ENCODE measurements at regions of chr13 and their contacts with region 1.

Region 1: GRCh38 chr13:30465585-30466357 is at the start of gene HMGB1:
- DNase-seq: peak; percentile 98 to 99
- ATAC-seq: peak; percentile 95 to 97 (median 96)
- H3K4me3 ChIP-seq: peak within 1 kb of the TSS; percentile 96
- H3K27ac ChIP-seq: peak within 1 kb of the TSS; percentile 99
- H3K4me1 ChIP-seq: peaks cover 27% of the 10 kb centered on the region
- H3K27me3 ChIP-seq: no peaks in the 10 kb centered on the region
- CTCF ChIP-seq: no peak
- total RNA-seq, gene HMGB1: 126 to 216 (median 187) TPM

Region 2: DNA sequence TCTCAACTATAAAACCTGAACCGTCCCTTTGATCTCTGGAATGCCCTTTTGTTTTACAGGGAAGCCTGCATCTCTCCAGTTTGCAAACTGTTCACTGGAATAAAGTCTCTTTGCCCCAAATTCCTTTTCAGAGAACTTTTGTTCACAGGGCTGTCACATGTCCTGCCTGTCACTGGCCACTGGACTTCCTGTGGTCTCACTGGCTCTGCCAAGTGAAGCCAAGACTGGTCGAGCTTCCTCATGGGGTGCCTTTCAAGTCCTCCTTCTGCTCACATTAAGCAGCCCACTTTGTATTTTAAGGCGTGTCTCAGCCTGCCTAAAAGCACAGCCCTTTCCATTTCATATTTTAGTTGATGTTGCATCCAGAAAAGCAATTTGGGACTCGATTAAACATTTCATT is 374.1 kb before region 1 on chr13:
- intact Hi-C with region 1: no loop called
- DNase-seq: no peak
- ATAC-seq: no peak
- H3K4me3 ChIP-seq: no peak overlapping the region
- H3K27ac ChIP-seq: no peak overlapping the region
- H3K4me1 ChIP-seq: no peaks in the 10 kb centered on the region
- H3K27me3 ChIP-seq: no peaks in the 10 kb centered on the region
- CTCF ChIP-seq: no peak

Region 3: GRCh38 chr13:30132623-30133553 is 332.9 kb before region 1 on chr13:
- intact Hi-C with region 1: loop called (anchors 5 kb)
- DNase-seq: peak; percentile 97
- ATAC-seq: peak; percentile 95 to 99 (median 96)
- H3K4me3 ChIP-seq: peak overlapping the region; percentile 15
- H3K27ac ChIP-seq: no peak overlapping the region
- H3K4me1 ChIP-seq: no peaks in the 10 kb centered on the region
- H3K27me3 ChIP-seq: no peaks in the 10 kb centered on the region
- CTCF ChIP-seq: peak; percentile 95

Region 4: DNA sequence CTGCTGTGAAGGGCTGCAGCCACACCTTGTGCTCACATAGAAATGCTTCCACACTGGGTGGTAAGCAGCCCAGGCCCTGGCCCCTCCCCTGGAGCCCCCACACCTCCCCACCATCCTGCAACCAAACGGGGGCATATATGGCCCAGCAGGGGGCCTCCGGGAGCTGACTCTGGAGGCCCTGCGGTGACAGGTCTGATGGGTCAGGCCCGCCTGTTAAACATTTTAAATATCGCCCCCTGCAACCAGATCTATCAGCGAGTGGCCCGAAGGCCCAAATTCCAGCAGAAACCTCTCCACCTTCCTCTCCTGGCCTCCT is 110.4 kb before region 1 on chr13:
- intact Hi-C with region 1: loop called in 1 of 2 experiments (anchors 5 kb)
- DNase-seq: no peak
- ATAC-seq: peak in 3 of 4 donors; percentile 63 to 70 (median 68)
- H3K4me3 ChIP-seq: no peak overlapping the region
- H3K27ac ChIP-seq: no peak overlapping the region
- H3K4me1 ChIP-seq: no peaks in the 10 kb centered on the region
- H3K27me3 ChIP-seq: peaks cover 0 to 2% (median 0%) of the 10 kb centered on the region in 3 donors
- CTCF ChIP-seq: peak; percentile 48

Region 5: DNA sequence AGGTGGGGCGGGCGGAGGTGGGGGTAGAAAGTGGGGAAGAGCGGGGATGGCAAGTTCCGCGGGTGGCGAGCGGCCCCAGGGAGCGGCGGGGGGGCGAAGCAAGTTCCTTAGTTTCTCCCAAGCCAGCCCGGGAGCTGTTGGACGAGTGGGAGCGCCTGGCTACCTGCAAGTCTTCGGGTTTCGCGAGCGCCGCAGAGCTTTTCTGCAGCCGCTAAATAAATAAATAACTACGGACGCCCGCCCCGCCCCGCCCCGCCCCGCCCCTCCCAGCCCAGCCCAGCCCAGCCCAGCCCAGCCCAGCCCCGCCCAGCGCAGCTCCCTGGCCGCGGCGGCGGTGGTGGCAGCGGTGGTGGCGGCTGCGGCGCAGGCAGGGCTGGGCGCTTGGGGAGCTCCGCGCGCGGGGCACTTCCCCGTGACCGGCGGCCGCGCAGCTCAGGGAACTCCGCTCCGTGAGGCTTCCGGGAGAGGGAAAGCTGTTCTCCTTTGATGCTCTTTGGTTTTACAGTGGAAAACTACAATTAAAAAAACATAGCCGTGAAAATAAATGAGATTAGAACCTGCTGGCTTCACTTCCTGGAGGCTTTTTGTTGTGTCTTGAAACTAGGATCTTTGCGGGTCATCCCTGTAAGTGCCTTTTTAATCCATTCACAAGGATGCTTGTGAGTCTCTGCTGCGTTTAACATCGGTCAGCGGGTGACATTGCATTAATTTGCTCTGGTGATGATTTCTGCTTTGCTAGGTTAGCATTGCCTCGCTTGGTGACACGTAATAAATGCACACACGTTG is 43.5 kb before region 1 on chr13 and contains the start of gene UBE2L5:
- intact Hi-C with region 1: loop called in 1 of 2 experiments (anchors 5 kb)
- DNase-seq: peak; percentile 83 to 89
- ATAC-seq: peak; percentile 90 to 95 (median 92)
- H3K4me3 ChIP-seq: peak within 1 kb of the TSS; percentile 64
- H3K27ac ChIP-seq: peak within 1 kb of the TSS; percentile 95
- H3K4me1 ChIP-seq: peaks cover 11% of the 10 kb centered on the region
- H3K27me3 ChIP-seq: no peaks in the 10 kb centered on the region
- CTCF ChIP-seq: no peak
- total RNA-seq, gene UBE2L5: not detected

Region 6: DNA sequence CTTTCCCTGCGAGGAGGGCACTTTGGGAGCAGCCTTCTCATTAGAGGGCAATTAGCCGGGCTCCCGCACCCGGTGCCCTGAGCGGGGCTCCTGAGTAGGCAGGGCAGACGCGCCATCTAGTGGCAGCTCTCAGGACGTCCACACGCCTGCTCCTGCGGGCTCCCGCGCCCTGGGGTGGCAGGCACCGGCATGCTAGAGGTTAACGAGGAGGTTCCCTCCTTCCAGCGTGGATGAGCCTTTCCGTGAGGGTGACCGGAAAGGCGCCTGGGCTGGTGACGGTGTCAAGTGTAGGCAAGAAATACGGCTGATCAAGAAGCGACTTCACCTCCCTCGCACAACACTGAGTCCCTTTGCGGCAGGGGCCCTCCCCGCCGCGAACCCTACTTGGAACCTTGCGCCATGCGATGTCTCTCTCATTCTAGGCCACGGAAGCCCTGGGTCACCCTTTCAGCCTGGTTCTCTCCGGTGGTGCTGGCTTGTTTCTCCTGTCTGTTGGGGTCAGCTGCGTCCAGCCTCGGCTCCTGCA is 337.2 kb after region 1 on chr13:
- intact Hi-C with region 1: loop called in 1 of 2 experiments (anchors 5 kb)
- DNase-seq: peak; percentile 90 to 95
- ATAC-seq: peak; percentile 94 to 98 (median 97)
- H3K4me3 ChIP-seq: peak overlapping the region; percentile 58
- H3K27ac ChIP-seq: peak overlapping the region; percentile 24
- H3K4me1 ChIP-seq: peaks cover 10% of the 10 kb centered on the region
- H3K27me3 ChIP-seq: peaks cover 0 to 2% (median 0%) of the 10 kb centered on the region in 3 donors
- CTCF ChIP-seq: peak; percentile 99